Heart left ventricle (tissue), 16 donors: ENCODE measurements at regions of chr6 and their contacts with region 1.

Region 1: GRCh38 chr6:111709615-111710398 is 104.1 kb upstream of the TRAF3IP2 start:
- DNase-seq: peak; percentile 59 to 83 (median 66)
- ATAC-seq: peak; percentile 56 to 79 (median 75)
- H3K4me3 ChIP-seq: peak overlapping the region in 4 of 12 donors; percentile 13 to 29 (median 16)
- H3K27ac ChIP-seq: peak overlapping the region in 11 of 12 donors; percentile 22 to 66 (median 48)
- H3K4me1 ChIP-seq: peaks cover 3 to 45% (median 31%) of the 10 kb centered on the region in 12 donors
- H3K27me3 ChIP-seq: no peaks in the 10 kb centered on the region
- CTCF ChIP-seq: peak; percentile 66 to 88 (median 78)
- POLR2A ChIP-seq: no peak

Region 2: DNA sequence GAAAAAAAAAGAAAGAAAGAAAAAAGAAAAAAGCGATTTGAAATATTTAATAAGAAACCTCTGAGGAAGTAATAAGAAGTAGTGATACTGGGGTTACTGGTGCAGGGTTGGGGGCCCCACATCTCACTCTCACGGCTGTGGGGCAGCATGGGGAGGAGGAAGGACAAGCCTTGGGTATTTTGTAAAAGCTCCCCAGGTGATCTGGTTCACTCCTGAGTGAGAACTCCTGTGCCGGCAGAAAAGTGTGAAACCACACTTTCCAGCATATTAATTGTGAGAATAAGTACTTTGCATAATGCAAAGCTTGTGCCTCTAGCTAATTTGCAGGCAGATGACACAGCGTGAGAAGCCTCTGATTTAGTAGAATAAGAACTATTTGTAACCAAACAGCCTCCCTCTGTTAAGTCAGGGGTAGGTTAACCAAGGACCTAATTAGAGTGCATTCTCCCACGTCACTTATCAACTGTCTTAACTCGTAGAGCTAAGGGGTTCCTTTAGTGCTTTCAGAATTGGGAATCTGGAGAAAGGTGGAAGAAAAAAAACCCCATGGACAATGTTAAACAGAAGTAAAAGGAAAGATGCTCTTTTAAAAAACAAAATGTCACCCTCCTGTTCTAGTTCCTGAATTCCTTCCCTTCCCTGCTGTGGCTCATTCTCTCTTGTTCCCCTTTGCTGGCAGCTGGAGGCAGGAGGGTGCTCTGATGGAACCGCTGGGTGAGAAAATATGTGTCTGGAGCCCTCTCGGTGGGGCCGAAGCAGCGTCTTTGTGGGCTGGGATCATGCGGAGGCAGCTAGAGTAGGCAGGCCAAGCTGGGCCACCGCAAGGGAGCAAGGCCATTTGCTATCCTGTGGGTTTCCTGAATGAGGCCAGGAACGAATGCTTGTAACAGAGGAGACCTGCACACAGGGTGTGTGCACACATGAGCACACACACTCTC is 54.7 kb after region 1 on chr6:
- intact Hi-C with region 1: loop called in 1 of 10 experiments (anchors 10 kb)
- DNase-seq: no peak
- ATAC-seq: peak in 1 of 4 donors; percentile 43
- H3K4me3 ChIP-seq: no peak overlapping the region
- H3K27ac ChIP-seq: peak overlapping the region in 7 of 12 donors; percentile 1 to 90 (median 12)
- H3K4me1 ChIP-seq: peaks cover 5 to 93% (median 62%) of the 10 kb centered on the region in 12 donors
- H3K27me3 ChIP-seq: no peaks in the 10 kb centered on the region
- CTCF ChIP-seq: no peak
- POLR2A ChIP-seq: no peak